Activated naive CD4-positive, alpha-beta T cell treated with anti-CD3 and anti-CD28 coated beads for 36 hours (primary cell): ENCODE measurements at regions of chr7 and their contacts with region 1.

Region 1: GRCh38 chr7:65216459-65216858 is 157.2 kb upstream of the ZNF92 start:
- DNase-seq: peak; percentile 74
- H3K4me3 Mint-ChIP-seq: no peak overlapping the region
- H3K27ac Mint-ChIP-seq: no peak overlapping the region
- H3K4me1 Mint-ChIP-seq: no peaks in the 10 kb centered on the region
- H3K27me3 Mint-ChIP-seq: no peaks in the 10 kb centered on the region

Region 2: GRCh38 chr7:65239707-65240352 is 23.4 kb after region 1 on chr7:
- CTCF ChIA-PET with region 1: no interaction called
- intact Hi-C with region 1: no loop called
- DNase-seq: no peak
- H3K4me3 Mint-ChIP-seq: peak overlapping the region; percentile 29
- H3K27ac Mint-ChIP-seq: no peak overlapping the region
- H3K4me1 Mint-ChIP-seq: no peaks in the 10 kb centered on the region
- H3K27me3 Mint-ChIP-seq: peaks cover 19% of the 10 kb centered on the region

Region 3: DNA sequence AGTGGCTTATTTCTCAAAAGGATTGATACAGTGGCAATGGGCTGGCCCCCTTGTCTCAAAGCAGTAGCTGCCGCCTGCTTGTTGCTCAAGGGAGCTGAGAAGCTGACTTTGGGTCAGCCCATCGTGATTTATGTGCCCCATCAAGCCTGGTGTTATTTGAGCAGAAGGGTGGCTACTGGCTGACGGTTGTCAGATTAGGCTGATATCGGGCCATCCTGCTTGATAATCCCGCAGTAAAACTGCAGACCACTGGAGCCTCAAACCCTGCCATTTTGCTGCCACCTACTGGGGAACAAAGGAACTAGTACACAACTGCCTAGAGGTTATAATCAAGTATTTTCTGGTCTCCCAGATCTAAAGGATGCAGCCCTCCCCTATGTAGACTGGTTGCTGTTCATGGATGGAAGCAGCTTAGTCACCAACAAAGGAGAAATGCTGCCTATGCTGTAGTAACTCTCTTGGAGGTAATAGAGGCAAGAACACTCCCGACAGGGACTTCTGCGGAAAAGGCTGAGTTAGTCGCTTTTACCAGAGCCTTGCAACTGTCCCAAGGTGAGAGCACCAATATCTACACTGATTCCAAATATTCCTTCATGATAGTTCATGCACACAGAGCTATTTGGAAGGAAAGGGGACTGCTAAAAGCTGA is 91.3 kb after region 1 on chr7:
- CTCF ChIA-PET with region 1: interaction called, 13 read pairs
- intact Hi-C with region 1: no loop called
- DNase-seq: peak; percentile 54
- H3K4me3 Mint-ChIP-seq: no peak overlapping the region
- H3K27ac Mint-ChIP-seq: no peak overlapping the region
- H3K4me1 Mint-ChIP-seq: no peaks in the 10 kb centered on the region
- H3K27me3 Mint-ChIP-seq: no peaks in the 10 kb centered on the region

Region 4: DNA sequence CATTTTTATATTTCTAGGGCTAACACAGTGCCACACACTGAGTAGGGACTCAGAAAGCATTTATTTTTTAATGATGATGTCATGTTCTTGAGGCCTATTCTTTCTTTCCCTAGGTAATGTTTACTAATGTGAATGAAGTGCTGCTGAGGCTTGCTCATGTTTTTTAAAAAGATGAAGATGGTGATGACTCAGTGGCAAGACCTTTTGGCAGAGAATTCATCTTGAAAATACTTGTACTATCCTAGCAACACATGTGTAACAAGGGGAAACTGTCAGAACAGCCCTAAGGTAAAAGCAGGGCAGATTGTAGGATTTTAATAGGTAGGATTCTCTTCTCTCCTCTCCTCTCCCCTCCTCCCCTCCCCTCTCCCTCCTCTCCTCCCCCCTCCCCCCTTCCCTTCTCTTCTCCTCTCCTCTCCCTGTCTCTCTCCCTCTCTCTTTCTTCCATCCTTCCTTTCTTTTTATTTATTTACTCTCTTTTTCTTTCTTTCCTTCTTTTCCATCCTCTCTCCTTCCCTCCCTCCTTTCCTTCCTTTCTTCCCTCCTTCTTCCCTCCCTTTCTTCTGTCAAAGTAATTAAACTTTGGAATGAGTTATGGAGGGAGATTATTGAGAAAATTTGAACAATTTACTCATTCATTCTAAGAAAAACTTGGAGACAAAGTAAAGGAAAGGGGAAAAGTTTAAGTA is 232.5 kb after region 1 on chr7:
- CTCF ChIA-PET with region 1: no interaction called
- intact Hi-C with region 1: loop called (anchors 1 kb)
- DNase-seq: no peak
- H3K4me3 Mint-ChIP-seq: no peak overlapping the region
- H3K27ac Mint-ChIP-seq: no peak overlapping the region
- H3K4me1 Mint-ChIP-seq: no peaks in the 10 kb centered on the region
- H3K27me3 Mint-ChIP-seq: peaks cover 17% of the 10 kb centered on the region